GM12878 (cell line): ENCODE measurements at regions of chr15 and their contacts with region 1.

Region 1: GRCh38 chr15:31215490-31216214 is 111.0 kb upstream of the KLF13 start:
- DNase-seq: no peak
- ATAC-seq: peak; percentile 91
- H3K4me3 ChIP-seq: peak overlapping the region; percentile 79
- H3K27ac ChIP-seq: peak overlapping the region; percentile 87
- H3K4me1 ChIP-seq: peaks cover 10% of the 10 kb centered on the region
- H3K27me3 ChIP-seq: no peaks in the 10 kb centered on the region
- CTCF ChIP-seq: peak; percentile 80 to 89 (median 89)
- EP300 ChIP-seq: no peak
- POLR2A ChIP-seq: peak; percentile 71
- RAD21 ChIP-seq: peak; percentile 88

Region 2: DNA sequence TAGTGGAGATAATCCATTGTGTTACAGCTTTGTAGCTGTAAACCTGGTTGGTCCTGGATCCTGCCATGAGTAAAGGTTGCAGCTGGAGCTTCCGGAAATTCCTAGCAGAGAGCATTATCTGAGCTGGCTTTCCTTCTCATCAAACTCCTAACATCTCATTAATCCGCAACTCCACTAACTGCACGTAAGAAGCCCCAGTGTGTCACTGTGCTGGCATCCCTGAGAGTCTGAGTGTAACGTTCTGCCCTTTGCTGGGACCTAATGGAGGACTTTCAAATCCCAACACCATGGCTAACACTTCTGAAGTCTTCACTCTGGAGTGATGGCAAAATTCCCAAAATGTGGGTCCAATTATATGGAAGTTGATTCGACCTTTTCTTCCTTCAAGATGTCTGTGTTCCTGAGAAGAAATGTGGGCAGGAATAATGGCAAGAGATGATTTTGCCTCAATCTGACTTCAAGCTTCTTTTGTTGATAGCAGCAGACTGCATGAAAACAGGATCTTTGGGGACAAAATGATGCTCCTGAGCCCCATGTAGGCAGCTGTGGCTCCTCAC is 104.5 kb before region 1 on chr15:
- CTCF ChIA-PET with region 1: no interaction called
- POLR2A ChIA-PET with region 1: no interaction called
- RAD21 ChIA-PET with region 1: no interaction called
- SMC1A ChIA-PET with region 1: no interaction called
- in situ Hi-C with region 1: no loop called
- intact Hi-C with region 1: no loop called
- DNase-seq: no peak
- ATAC-seq: no peak
- H3K4me3 ChIP-seq: no peak overlapping the region
- H3K27ac ChIP-seq: no peak overlapping the region
- H3K4me1 ChIP-seq: no peaks in the 10 kb centered on the region
- H3K27me3 ChIP-seq: no peaks in the 10 kb centered on the region
- CTCF ChIP-seq: no peak
- EP300 ChIP-seq: no peak
- POLR2A ChIP-seq: no peak
- RAD21 ChIP-seq: no peak

Region 3: DNA sequence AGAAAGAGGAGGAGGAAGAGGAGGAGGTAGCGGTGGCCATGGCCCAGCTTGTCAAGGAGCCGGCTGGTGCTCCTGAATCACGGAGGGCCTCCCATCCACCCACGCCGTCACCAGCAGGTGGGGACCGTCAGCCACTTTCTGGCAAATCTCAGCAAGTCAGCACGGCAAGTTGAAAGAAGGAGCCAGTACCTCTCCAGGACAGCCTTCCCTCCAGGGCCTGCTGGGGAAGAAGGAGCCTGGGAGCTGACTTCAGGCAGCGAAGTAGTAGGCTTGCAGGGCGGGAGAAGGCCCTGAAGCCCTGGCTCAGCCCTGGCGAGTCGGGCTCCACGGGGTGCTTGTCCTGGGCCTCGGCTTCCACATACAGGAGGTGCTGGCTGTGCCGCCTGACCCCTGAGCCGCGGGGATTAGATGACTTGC is 14.9 kb before region 1 on chr15:
- CTCF ChIA-PET with region 1: interaction called, 39 read pairs
- POLR2A ChIA-PET with region 1: interaction called, 6 read pairs
- RAD21 ChIA-PET with region 1: interaction called, 7 read pairs
- SMC1A ChIA-PET with region 1: interaction called, 6 read pairs
- in situ Hi-C with region 1: no loop called
- intact Hi-C with region 1: no loop called
- DNase-seq: no peak
- ATAC-seq: peak; percentile 83
- H3K4me3 ChIP-seq: no peak overlapping the region
- H3K27ac ChIP-seq: no peak overlapping the region
- H3K4me1 ChIP-seq: peaks cover 30% of the 10 kb centered on the region
- H3K27me3 ChIP-seq: no peaks in the 10 kb centered on the region
- CTCF ChIP-seq: peak; percentile 61 to 88 (median 74)
- EP300 ChIP-seq: no peak
- POLR2A ChIP-seq: no peak
- RAD21 ChIP-seq: peak; percentile 79

Region 4: GRCh38 chr15:31228985-31229826 is 13.6 kb after region 1 on chr15:
- CTCF ChIA-PET with region 1: interaction called, 14 read pairs
- POLR2A ChIA-PET with region 1: interaction called, 7 read pairs
- RAD21 ChIA-PET with region 1: interaction called, 22 read pairs
- SMC1A ChIA-PET with region 1: interaction called, 17 read pairs
- in situ Hi-C with region 1: no loop called
- intact Hi-C with region 1: no loop called
- DNase-seq: peak; percentile 91
- ATAC-seq: peak; percentile 83
- H3K4me3 ChIP-seq: peak overlapping the region; percentile 86
- H3K27ac ChIP-seq: peak overlapping the region; percentile 80
- H3K4me1 ChIP-seq: peaks cover 37% of the 10 kb centered on the region
- H3K27me3 ChIP-seq: no peaks in the 10 kb centered on the region
- CTCF ChIP-seq: no peak
- EP300 ChIP-seq: 0 out of 4 replicates have a peak, but pooled peaks of 1 of the 2 experiments have one; percentile 27
- POLR2A ChIP-seq: peak; percentile 85
- RAD21 ChIP-seq: no peak

Region 5: GRCh38 chr15:31254431-31255175 is 39.0 kb after region 1 on chr15:
- CTCF ChIA-PET with region 1: interaction called, 10 read pairs
- POLR2A ChIA-PET with region 1: no interaction called
- RAD21 ChIA-PET with region 1: interaction called, 13 read pairs
- SMC1A ChIA-PET with region 1: interaction called, 6 read pairs
- in situ Hi-C with region 1: no loop called
- intact Hi-C with region 1: no loop called
- DNase-seq: no peak
- ATAC-seq: no peak
- H3K4me3 ChIP-seq: no peak overlapping the region
- H3K27ac ChIP-seq: peak overlapping the region; percentile 76
- H3K4me1 ChIP-seq: peaks cover 38% of the 10 kb centered on the region
- H3K27me3 ChIP-seq: no peaks in the 10 kb centered on the region
- CTCF ChIP-seq: no peak
- EP300 ChIP-seq: no peak
- POLR2A ChIP-seq: no peak
- RAD21 ChIP-seq: no peak

Region 6: DNA sequence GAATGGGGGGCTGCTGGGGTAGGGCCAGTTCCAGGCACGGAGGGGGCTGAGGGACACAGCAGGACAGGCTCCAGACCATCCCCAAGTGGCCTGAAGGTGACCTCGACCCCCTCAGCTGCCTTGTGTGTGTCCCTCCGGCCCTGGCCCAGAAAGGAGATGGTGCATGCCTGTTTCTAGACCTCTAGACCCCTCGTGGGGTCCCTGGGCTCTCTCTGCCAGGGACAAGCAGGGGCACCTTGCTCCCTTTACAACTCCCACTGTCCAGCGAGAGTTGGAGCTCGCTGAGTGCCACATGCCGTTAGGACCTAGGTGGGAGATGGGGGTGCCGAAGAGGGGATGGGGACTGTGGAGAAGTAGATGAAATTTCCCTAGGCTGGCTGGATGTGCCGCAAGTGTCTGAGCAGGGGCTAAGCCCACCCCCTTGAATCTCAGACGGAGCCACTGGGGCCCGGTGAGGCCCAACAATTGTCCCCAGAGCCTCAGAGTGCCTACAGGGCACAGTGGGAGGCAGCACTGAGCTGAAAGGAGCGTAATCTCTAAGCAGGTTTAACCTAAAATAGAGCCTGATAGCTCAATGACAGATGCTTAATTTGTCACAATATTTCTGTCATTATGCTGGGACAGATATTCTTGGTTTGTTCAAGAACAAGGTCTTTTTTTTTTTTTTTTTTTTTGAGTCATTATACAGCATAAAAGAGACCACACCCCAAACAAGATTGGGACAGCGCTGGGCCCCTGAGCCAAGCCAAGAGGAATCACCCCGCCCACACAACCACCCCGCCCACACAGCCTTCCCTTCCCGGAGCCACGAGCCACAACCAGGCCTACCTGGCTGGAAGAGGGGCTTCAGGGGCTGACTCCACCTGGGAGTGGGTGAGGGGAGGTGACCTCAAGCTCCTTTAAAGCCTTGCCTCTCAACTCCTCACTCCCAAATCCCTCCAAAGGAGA is 87.4 kb after region 1 on chr15:
- CTCF ChIA-PET with region 1: interaction called, 8 read pairs
- POLR2A ChIA-PET with region 1: interaction called, 3 read pairs
- RAD21 ChIA-PET with region 1: interaction called, 15 read pairs
- SMC1A ChIA-PET with region 1: interaction called, 7 read pairs
- in situ Hi-C with region 1: no loop called
- intact Hi-C with region 1: no loop called
- DNase-seq: no peak
- ATAC-seq: peak; percentile 76
- H3K4me3 ChIP-seq: no peak overlapping the region
- H3K27ac ChIP-seq: no peak overlapping the region
- H3K4me1 ChIP-seq: peaks cover 19% of the 10 kb centered on the region
- H3K27me3 ChIP-seq: no peaks in the 10 kb centered on the region
- CTCF ChIP-seq: peak; percentile 19 to 34 (median 31); a peak in 5 of 6 replicates
- EP300 ChIP-seq: no peak
- POLR2A ChIP-seq: no peak
- RAD21 ChIP-seq: peak; percentile 40; the same call in 1 of the 2 replicates

Region 7: GRCh38 chr15:31365655-31366127 is 150.0 kb after region 1 on chr15:
- CTCF ChIA-PET with region 1: interaction called, 6 read pairs
- POLR2A ChIA-PET with region 1: no interaction called
- RAD21 ChIA-PET with region 1: interaction called, 13 read pairs
- SMC1A ChIA-PET with region 1: interaction called, 7 read pairs
- in situ Hi-C with region 1: no loop called
- intact Hi-C with region 1: loop called (anchors 5 kb)
- DNase-seq: no peak
- ATAC-seq: peak; percentile 81
- H3K4me3 ChIP-seq: peak overlapping the region; percentile 20; the same call in 1 of the 2 replicates
- H3K27ac ChIP-seq: peak overlapping the region; percentile 41
- H3K4me1 ChIP-seq: peaks cover 75% of the 10 kb centered on the region
- H3K27me3 ChIP-seq: no peaks in the 10 kb centered on the region
- CTCF ChIP-seq: peak; percentile 32 to 57 (median 50); a peak in 4 of 6 replicates
- EP300 ChIP-seq: no peak
- POLR2A ChIP-seq: no peak
- RAD21 ChIP-seq: 0 out of 2 replicates have a peak, but pooled peaks have one; percentile 38